Sciatic nerve (tissue), 2 donors: ENCODE measurements at regions of chr10 and their contacts with region 1.

Region 1: GRCh38 chr10:49726593-49726992 is 35.5 kb downstream of the OGDHL start:
- DNase-seq: no peak
- ATAC-seq: no peak

Region 2: GRCh38 chr10:49696311-49696710 is 30.3 kb before region 1 on chr10:
- intact Hi-C with region 1: loop called (anchors 1 kb)
- DNase-seq: no peak
- ATAC-seq: no peak